Activated CD4-positive, alpha-beta T cell treated with anti-CD3 and anti-CD28 coated beads for 36 hours (primary cell): ENCODE measurements at regions of chr13 and their contacts with region 1.

Region 1: GRCh38 chr13:24709186-24709913 is 29.1 kb downstream of the ATP12A start:
- DNase-seq: peak; percentile 84
- ATAC-seq: peak; percentile 98
- H3K4me3 Mint-ChIP-seq: peak overlapping the region; percentile 10
- H3K27ac Mint-ChIP-seq: peak overlapping the region; percentile 75
- H3K4me1 Mint-ChIP-seq: peaks cover 25% of the 10 kb centered on the region
- H3K27me3 Mint-ChIP-seq: peaks cover 3% of the 10 kb centered on the region

Region 2: DNA sequence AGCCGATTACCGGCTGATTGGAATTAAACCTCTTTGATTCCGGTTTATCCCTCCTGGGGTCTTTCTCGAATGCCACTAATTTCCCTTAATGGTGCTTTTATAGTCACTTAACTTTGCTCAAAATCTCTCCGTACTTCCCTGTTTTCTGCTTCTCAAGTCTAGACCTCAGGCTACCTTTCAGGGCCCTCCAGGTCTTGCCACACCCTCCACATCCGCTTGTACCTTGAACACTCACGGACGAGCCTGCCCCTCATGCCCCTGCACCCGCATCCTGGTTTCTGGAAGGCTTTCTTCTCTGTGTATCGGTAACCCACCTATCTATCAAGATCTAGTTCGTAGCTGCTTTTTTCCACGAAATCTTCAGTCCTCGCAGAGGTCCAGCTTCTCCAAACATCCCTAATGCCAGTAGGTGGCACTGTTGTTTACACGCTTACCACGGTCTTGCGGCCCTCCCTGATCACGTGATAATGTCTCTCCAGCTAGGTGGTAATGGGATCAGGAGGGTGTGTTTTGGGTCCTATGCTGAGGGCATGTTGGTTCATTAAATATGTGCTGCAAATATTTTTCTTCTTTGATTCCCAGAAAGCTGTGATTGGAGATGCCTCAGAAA is 15.4 kb before region 1 on chr13:
- CTCF ChIA-PET with region 1: interaction called, 11 read pairs
- POLR2A ChIA-PET with region 1: interaction called, 9 read pairs
- intact Hi-C with region 1: no loop called
- DNase-seq: peak; percentile 67
- ATAC-seq: peak; percentile 87
- H3K4me3 Mint-ChIP-seq: no peak overlapping the region
- H3K27ac Mint-ChIP-seq: no peak overlapping the region
- H3K4me1 Mint-ChIP-seq: peaks cover 7% of the 10 kb centered on the region
- H3K27me3 Mint-ChIP-seq: peaks cover 27% of the 10 kb centered on the region